AG04449 (cell line): ENCODE measurements at regions of chrX and their contacts with region 1.

Region 1: GRCh38 chrX:15471016-15471415 is 22.1 kb downstream of the PIR start:
- DNase-seq: no peak
- H3K4me3 ChIP-seq: no peak overlapping the region
- CTCF ChIP-seq: peak; percentile 67

Region 2: DNA sequence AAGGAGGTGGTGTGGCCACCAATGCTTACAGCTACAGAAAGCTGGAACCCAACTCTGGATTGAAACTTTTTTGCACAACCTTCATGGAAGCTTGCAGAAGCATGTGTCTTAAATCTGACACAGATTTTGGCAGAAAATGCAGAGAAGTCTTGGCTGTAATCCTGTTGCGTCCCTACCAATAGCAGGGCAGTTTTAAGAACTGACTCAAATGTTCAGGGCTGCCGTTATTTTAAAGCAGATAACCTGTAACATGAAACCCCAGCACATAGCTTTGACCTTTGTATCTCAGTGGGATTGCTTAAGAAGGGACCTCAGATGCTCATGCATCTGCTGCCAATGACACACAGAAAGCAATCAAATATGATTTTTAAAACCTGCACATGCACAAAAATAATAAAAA is 86.7 kb before region 1 on chrX and contains the start of gene VEGFD:
- CTCF ChIA-PET with region 1: interaction called, 12 read pairs
- POLR2A ChIA-PET with region 1: no interaction called
- DNase-seq: peak; percentile 12
- H3K4me3 ChIP-seq: no peak within 1 kb of the TSS
- CTCF ChIP-seq: no peak

Region 3: DNA sequence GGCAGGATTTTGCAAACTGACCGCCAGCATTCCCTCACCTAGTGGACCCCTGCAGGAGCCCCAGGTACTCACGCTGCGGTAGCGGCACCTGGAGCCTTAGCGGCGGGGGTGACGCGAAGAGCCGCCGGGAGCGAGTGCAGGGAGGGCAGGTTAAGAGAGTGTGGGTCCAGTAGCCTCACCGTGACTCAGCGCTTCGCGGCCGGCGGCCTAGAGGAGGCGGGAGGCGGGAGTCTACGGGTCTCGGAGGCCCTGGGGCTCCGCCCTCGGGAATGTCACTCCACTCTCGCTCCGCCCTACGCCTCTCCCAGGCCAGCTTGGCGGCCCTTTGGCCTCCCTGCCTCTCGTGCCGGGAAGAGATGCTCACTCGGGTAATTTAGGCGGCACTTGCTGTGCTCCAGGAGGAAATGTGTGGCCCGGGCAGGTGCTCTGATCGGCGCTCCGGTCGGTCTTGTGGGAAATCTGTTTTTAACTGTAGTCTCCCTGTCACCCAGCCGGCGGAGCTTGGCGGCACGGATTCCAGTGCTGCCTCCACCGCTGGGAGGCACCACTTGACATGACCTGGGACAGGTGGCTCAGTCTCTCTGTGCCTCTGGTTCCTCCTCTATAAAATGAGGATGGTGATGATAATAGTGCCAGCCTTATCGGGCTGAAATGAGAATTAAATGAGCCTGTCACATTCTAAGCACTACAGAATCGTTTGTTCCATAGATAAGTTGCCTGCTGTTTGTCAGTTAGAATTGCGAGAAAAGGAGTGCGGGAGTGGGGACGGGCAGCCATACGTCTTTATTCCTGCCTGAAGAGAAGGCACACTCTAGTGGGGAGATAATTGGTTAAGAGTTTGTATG is 22.3 kb after region 1 on chrX and contains the start of gene PIR:
- CTCF ChIA-PET with region 1: interaction called, 12 read pairs
- POLR2A ChIA-PET with region 1: no interaction called
- DNase-seq: no peak
- H3K4me3 ChIP-seq: peak within 1 kb of the TSS; percentile 58
- CTCF ChIP-seq: peak; percentile 40